Gastrocnemius medialis (tissue), 4 donors: ENCODE measurements at regions of chr15 and their contacts with region 1.

Region 1: DNA sequence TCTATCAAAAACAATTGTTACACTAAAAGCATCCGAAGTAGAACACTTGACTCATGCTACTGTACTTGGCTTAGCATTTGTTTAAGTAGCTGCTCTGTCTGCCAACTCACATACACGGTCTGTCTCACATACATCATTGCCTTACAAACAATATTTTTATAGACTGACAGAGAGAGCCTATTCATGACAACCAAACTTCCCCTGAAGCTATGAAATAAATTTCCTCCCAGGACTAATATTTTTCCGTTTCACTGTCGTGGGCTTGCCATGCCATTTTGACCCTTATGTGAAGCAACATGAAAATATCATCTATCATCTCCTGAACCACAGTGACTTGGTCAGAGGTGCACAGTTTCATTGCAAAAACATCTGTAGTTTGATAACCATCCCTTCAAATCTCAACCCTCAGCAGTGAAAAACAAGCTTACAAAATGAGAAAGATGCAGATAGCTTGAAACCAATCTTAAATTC is 66.5 kb upstream of the PYGO1 start:
- DNase-seq: no peak
- ATAC-seq: no peak
- H3K4me3 ChIP-seq: no peak overlapping the region
- H3K27ac ChIP-seq: no peak overlapping the region
- H3K4me1 ChIP-seq: peaks cover 0 to 3% of the 10 kb centered on the region in 2 donors
- H3K27me3 ChIP-seq: no peaks in the 10 kb centered on the region
- CTCF ChIP-seq: no peak
- POLR2A ChIP-seq: no peak

Region 2: GRCh38 chr15:55928955-55929354 is 274.4 kb after region 1 on chr15:
- in situ Hi-C with region 1: loop called in 3 of 4 experiments (anchors 10 to 25 kb)
- intact Hi-C with region 1: no loop called
- DNase-seq: no peak
- ATAC-seq: no peak
- H3K4me3 ChIP-seq: no peak overlapping the region
- H3K27ac ChIP-seq: no peak overlapping the region
- H3K4me1 ChIP-seq: no peaks in the 10 kb centered on the region
- H3K27me3 ChIP-seq: no peaks in the 10 kb centered on the region
- CTCF ChIP-seq: no peak
- POLR2A ChIP-seq: no peak

Region 3: GRCh38 chr15:56052395-56053045 is 397.9 kb after region 1 on chr15:
- in situ Hi-C with region 1: loop called in 2 of 4 experiments (anchors 10 kb)
- intact Hi-C with region 1: no loop called
- DNase-seq: no peak
- ATAC-seq: peak; percentile 52 to 69
- H3K4me3 ChIP-seq: no peak overlapping the region
- H3K27ac ChIP-seq: no peak overlapping the region
- H3K4me1 ChIP-seq: no peaks in the 10 kb centered on the region
- H3K27me3 ChIP-seq: no peaks in the 10 kb centered on the region
- CTCF ChIP-seq: peak; percentile 49 to 84 (median 60)
- POLR2A ChIP-seq: no peak